Cardiac septum (tissue), 1 donor: ENCODE measurements at regions of chr1 and their contacts with region 1.

Region 1: DNA sequence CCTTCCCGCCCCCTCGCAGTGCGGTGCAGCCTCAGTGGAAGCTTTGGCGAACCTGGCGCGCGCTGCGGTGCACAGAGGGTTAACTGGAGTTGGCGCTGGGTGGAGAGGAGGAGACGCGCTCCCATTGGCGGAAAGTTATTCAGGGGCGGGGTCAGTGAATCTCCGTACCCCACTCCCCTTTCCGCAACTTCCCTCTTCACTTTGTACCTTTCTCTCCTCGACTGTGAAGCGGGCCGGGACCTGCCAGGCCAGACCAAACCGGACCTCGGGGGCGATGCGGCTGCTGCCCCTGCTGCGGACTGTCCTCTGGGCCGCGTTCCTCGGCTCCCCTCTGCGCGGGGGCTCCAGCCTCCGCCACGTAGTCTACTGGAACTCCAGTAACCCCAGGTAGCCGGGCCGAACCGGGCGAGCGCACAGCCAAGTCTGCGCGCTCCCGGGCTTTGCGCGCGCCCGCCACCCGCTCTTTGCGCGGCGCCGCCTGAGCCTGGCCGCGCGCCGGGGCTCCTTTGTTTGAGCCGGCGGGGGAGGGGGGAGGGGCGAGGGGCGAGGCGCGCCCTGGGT is at the start of gene EFNA4:
- DNase-seq: peak; percentile 94
- total RNA-seq, gene EFNA4: 1.9 TPM

Region 2: GRCh38 chr1:155053616-155054015 is 10.0 kb before region 1 on chr1:
- intact Hi-C with region 1: no loop called
- DNase-seq: no peak

Region 3: GRCh38 chr1:155084722-155085503 is 21.3 kb after region 1 on chr1:
- intact Hi-C with region 1: loop called (anchors 1 kb)
- DNase-seq: peak; percentile 96